Activated naive CD4-positive, alpha-beta T cell treated with anti-CD3 and anti-CD28 coated beads for 36 hours (primary cell): ENCODE measurements at regions of chr9 and their contacts with region 1.

Region 1: GRCh38 chr9:38227061-38227540 is 158.1 kb upstream of the SHB start:
- DNase-seq: peak; percentile 86
- H3K4me3 Mint-ChIP-seq: peak overlapping the region; percentile 61
- H3K27ac Mint-ChIP-seq: peak overlapping the region; percentile 13
- H3K4me1 Mint-ChIP-seq: peaks cover 18% of the 10 kb centered on the region
- H3K27me3 Mint-ChIP-seq: no peaks in the 10 kb centered on the region

Region 2: GRCh38 chr9:38154501-38155421 is 72.3 kb before region 1 on chr9:
- CTCF ChIA-PET with region 1: no interaction called
- intact Hi-C with region 1: no loop called
- DNase-seq: no peak
- H3K4me3 Mint-ChIP-seq: no peak overlapping the region
- H3K27ac Mint-ChIP-seq: no peak overlapping the region
- H3K4me1 Mint-ChIP-seq: no peaks in the 10 kb centered on the region
- H3K27me3 Mint-ChIP-seq: peaks cover 3% of the 10 kb centered on the region

Region 3: GRCh38 chr9:38178237-38178636 is 48.9 kb before region 1 on chr9:
- CTCF ChIA-PET with region 1: no interaction called
- intact Hi-C with region 1: loop called (anchors 10 kb)
- DNase-seq: no peak
- H3K4me3 Mint-ChIP-seq: no peak overlapping the region
- H3K27ac Mint-ChIP-seq: no peak overlapping the region
- H3K4me1 Mint-ChIP-seq: peaks cover 6% of the 10 kb centered on the region
- H3K27me3 Mint-ChIP-seq: peaks cover 4% of the 10 kb centered on the region

Region 4: DNA sequence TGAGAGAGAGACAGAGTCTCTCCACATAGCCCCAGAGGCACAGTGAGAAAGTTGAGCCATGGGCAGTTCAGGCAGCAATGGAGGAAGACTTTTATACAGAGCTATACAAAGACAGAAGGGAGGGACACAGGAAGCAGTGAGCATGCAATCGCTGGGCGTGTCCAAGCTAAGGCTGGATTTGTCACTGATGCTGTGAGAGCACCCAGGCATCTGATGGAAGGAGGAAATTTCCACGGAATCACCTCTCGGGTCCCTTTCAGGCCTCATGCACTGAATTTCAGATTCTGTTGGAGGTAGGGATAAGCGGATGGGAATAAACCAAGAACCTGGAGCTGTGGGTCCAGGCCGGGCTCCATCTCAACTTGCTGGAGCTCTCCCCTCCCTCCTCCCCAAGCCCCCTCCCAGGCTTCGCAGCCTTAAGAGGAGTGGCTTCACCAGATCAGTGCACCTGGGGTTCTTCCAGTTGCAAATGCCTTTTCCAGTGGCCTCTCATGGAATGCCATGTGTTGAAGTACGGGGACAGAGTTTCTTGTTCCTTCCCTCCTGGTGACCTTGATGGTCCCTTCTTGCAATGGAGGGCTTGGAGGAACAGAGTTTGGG is 50.6 kb after region 1 on chr9:
- CTCF ChIA-PET with region 1: no interaction called
- intact Hi-C with region 1: loop called (anchors 10 kb)
- DNase-seq: no peak
- H3K4me3 Mint-ChIP-seq: no peak overlapping the region
- H3K27ac Mint-ChIP-seq: no peak overlapping the region
- H3K4me1 Mint-ChIP-seq: peaks cover 15% of the 10 kb centered on the region
- H3K27me3 Mint-ChIP-seq: no peaks in the 10 kb centered on the region